Activated T-helper 1 cell treated with anti-CD3 and anti-CD28 coated beads, Interleukin-12 subunit alpha, Interleukin-12 subunit beta, Interleukin-2, Interleukin-4 antibody, amounts not matched to agents 30 ng/mL and 10 ng/mL and 1 ng/mL, durations not matched to agents 14 hours and 24 hours and 36 hours (primary cell): ENCODE measurements at regions of chr19 and their contacts with region 1.

Region 1: DNA sequence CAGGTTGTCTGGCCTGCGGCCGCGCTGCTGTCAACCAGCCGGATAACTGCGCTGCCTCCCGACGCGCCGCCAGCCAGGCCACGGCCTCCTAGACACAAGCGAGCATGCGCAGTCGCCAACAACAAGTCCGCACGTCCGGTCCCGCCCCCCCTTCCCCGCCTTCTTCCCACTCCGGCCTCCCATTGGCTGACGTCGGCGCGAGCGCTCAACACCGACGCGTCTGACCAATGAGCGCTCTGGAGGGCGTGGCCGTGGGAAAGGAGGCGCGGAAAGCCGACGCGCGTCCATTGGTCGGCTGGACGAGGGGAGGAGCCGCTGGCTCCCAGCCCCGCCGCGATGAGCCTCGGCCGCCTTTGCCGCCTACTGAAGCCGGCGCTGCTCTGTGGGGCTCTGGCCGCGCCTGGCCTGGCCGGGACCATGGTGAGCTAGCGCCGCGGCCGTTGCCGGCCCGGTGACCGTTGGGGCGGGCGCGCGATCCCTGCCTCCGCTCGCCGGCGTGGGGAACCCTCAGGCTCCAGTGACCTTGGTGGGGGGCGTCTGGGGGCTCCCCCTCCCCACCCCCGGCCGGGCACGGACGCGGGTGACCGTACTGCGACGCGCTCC is at the start of gene GPX4:
- DNase-seq: peak; percentile 96
- H3K4me3 Mint-ChIP-seq: peak within 1 kb of the TSS; percentile 80
- H3K27ac Mint-ChIP-seq: peak within 1 kb of the TSS; percentile 90
- H3K4me1 Mint-ChIP-seq: peaks cover 30% of the 10 kb centered on the region
- H3K27me3 Mint-ChIP-seq: peaks cover 2% of the 10 kb centered on the region
- total RNA-seq, gene GPX4: 236 and 241 TPM in 2 replicates

Region 2: DNA sequence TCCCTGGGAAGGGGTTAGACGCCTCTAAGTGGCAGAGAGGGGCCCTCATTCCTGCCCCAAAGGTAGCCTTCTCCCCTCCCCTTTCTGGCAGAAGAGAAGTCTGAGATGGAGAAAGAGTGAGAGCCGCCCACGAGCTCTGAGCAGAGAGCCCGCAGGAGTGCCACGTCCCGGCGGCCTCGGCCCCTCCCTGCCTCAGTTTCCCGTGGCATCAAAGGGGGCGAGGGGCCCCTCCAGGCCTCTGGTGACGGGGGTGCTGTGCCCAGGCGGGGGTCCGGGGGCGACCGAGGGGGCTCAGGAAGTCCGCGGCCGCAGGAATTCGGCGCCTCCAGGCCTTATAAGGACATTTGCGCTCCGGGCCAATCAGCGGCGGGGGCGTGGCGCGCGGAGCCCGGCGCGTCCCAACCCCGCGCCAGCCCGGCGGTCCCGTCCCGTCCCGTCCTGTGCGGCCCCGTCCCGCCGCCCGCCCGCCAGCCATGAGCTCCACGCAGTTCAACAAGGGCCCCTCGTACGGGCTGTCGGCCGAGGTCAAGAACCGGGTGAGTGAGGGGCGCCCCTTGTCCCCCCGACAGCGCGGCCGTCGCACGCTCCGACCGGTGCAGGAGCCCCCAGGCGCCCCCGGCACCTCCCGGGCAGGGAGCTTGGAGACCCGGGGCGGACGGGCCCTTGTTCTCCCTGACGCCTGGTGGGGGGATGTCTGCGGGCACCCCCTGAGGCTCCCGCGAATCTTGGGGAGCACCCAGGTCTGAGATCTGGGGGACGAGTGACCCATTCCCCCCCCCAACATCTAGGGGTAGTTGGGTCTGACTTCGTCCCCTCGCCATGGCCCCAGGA is 77.4 kb before region 1 on chr19 and contains the start of gene CNN2:
- intact Hi-C with region 1: loop called (anchors 1 kb)
- DNase-seq: peak; percentile 73
- H3K4me3 Mint-ChIP-seq: peak within 1 kb of the TSS; percentile 95
- H3K27ac Mint-ChIP-seq: peak within 1 kb of the TSS; percentile 87
- H3K4me1 Mint-ChIP-seq: peaks cover 21% of the 10 kb centered on the region
- H3K27me3 Mint-ChIP-seq: peaks cover 2% of the 10 kb centered on the region
- total RNA-seq, gene CNN2: 112 and 114 TPM in 2 replicates

Region 3: GRCh38 chr19:1241417-1242095 is 137.7 kb after region 1 on chr19 and contains the start of gene ATP5F1D:
- intact Hi-C with region 1: loop called (anchors 2 kb)
- DNase-seq: peak; percentile 91
- H3K4me3 Mint-ChIP-seq: peak within 1 kb of the TSS; percentile 91
- H3K27ac Mint-ChIP-seq: peak within 1 kb of the TSS; percentile 84
- H3K4me1 Mint-ChIP-seq: peaks cover 27% of the 10 kb centered on the region
- H3K27me3 Mint-ChIP-seq: peaks cover 16% of the 10 kb centered on the region
- total RNA-seq, gene ATP5F1D: 234 and 239 TPM in 2 replicates